Naive thymus-derived CD4-positive, alpha-beta T cell (primary cell): ENCODE measurements at regions of chr15 and their contacts with region 1.

Region 1: GRCh38 chr15:68795298-68795848 is 25.3 kb downstream of the ANP32A start:
- DNase-seq: peak; percentile 48 to 78 (median 67)
- ATAC-seq: peak; percentile 85
- H3K4me3 ChIP-seq: no peak overlapping the region
- H3K4me3 Mint-ChIP-seq: peak overlapping the region; percentile 46 to 79 (median 68)
- H3K27ac ChIP-seq: peak overlapping the region; percentile 50
- H3K27ac Mint-ChIP-seq: peak overlapping the region; percentile 44 to 91 (median 87)
- H3K4me1 ChIP-seq: peaks cover 63 to 72% of the 10 kb centered on the region in 2 donors
- H3K4me1 Mint-ChIP-seq: peaks cover 81 to 100% (median 96%) of the 10 kb centered on the region in 7 donors
- H3K27me3 ChIP-seq: no peaks in the 10 kb centered on the region
- H3K27me3 Mint-ChIP-seq: no peaks in the 10 kb centered on the region

Region 2: GRCh38 chr15:68097029-68097428 is 698.3 kb before region 1 on chr15:
- CTCF ChIA-PET with region 1: no interaction called
- POLR2A ChIA-PET with region 1: no interaction called
- intact Hi-C with region 1: no loop called
- DNase-seq: no peak
- ATAC-seq: no peak
- H3K4me3 ChIP-seq: no peak overlapping the region
- H3K4me3 Mint-ChIP-seq: peak overlapping the region in 3 of 10 donors; percentile 8 to 24 (median 9)
- H3K27ac ChIP-seq: no peak overlapping the region
- H3K27ac Mint-ChIP-seq: no peak overlapping the region
- H3K4me1 ChIP-seq: peaks cover 0 to 4% of the 10 kb centered on the region in 2 donors
- H3K4me1 Mint-ChIP-seq: peaks cover 30 to 70% (median 54%) of the 10 kb centered on the region in 7 donors
- H3K27me3 ChIP-seq: no peaks in the 10 kb centered on the region
- H3K27me3 Mint-ChIP-seq: no peaks in the 10 kb centered on the region

Region 3: GRCh38 chr15:68812597-68813548 is 17.5 kb after region 1 on chr15:
- CTCF ChIA-PET with region 1: interaction called, 3 read pairs
- POLR2A ChIA-PET with region 1: interaction called, 47 read pairs
- intact Hi-C with region 1: loop called (anchors 1 kb)
- DNase-seq: no peak
- ATAC-seq: no peak
- H3K4me3 ChIP-seq: no peak overlapping the region
- H3K4me3 Mint-ChIP-seq: peak overlapping the region in 8 of 10 donors; percentile 23 to 61 (median 42)
- H3K27ac ChIP-seq: no peak overlapping the region
- H3K27ac Mint-ChIP-seq: peak overlapping the region; percentile 5 to 77 (median 63)
- H3K4me1 ChIP-seq: peaks cover 35 to 50% of the 10 kb centered on the region in 2 donors
- H3K4me1 Mint-ChIP-seq: peaks cover 67 to 91% (median 85%) of the 10 kb centered on the region in 7 donors
- H3K27me3 ChIP-seq: no peaks in the 10 kb centered on the region
- H3K27me3 Mint-ChIP-seq: no peaks in the 10 kb centered on the region